ENCODE measurements at regions of chr13 and their contacts with region 1.

Region 1: GRCh38 chr13:44068737-44069136 is 189.0 kb downstream of the LACC1 start:
- DNase-seq: no peak

Region 2: GRCh38 chr13:44128552-44129001 is 59.8 kb after region 1 on chr13:
- intact Hi-C with region 1: loop called in 1 of 2 experiments (anchors 10 kb)
- DNase-seq: no peak

Region 3: DNA sequence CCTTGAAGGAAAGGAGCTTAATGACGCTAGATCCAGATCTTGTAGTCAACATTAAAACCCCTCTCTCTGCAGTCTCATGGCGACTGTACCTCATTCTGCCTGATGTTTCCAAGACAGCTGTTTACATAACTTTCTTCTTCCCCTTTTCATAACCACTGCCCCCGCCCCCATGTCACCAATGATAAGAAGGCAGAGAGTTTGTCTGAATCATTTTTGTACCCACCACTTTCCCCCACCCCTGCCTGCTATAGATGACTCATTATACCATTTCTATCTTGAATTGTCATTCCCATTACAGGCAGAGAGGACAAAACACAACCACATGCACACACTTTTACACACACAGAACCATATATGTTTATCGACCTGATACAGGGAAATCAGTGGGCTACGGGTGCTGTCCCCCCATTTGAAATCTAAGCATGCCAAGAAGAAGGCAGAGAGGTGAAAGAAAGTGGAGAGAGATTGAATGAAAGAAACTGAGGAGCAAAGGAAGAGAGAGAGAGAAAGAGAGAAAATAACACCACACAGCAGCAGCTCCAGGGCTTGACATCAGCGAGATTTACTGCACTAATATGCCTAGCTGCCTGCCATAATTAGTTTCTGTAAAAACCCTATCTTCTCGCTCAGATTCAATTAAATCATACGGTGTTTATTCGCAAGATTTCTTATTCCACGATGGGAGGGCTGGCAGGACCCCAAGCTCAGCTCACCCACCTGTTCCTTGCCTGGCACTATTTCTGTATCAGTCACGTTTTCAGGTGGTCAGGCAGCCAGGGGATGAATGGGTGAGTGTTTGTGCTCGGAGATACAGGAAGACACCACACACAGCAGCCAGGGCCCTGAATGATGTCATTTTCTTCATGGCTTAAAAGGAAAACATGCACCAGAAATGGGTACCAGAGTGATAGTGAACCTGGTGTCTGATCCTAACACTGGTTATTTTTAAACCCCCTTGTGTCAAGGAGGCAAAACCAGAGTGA is 190.6 kb after region 1 on chr13:
- intact Hi-C with region 1: no loop called
- DNase-seq: no peak